ENCODE measurements at regions of chr12 and their contacts with region 1.

Region 1: GRCh38 chr12:53974084-53975063 is at the start of gene HOTAIR:
- DNase-seq: peak; percentile 48
- ATAC-seq: peak; percentile 53
- H3K4me3 Mint-ChIP-seq: peak within 1 kb of the TSS; percentile 48
- H3K27ac Mint-ChIP-seq: no peak within 1 kb of the TSS
- H3K4me1 Mint-ChIP-seq: peaks cover 24% of the 10 kb centered on the region
- H3K27me3 Mint-ChIP-seq: peaks cover 83% of the 10 kb centered on the region
- total RNA-seq, gene HOTAIR: not detected

Region 2: GRCh38 chr12:53917126-53917653 is 57.2 kb before region 1 on chr12:
- CTCF ChIA-PET with region 1: no interaction called
- POLR2A ChIA-PET with region 1: no interaction called
- intact Hi-C with region 1: no loop called
- DNase-seq: no peak
- ATAC-seq: no peak
- H3K4me3 Mint-ChIP-seq: no peak overlapping the region
- H3K27ac Mint-ChIP-seq: no peak overlapping the region
- H3K4me1 Mint-ChIP-seq: no peaks in the 10 kb centered on the region
- H3K27me3 Mint-ChIP-seq: peaks cover 44% of the 10 kb centered on the region

Region 3: DNA sequence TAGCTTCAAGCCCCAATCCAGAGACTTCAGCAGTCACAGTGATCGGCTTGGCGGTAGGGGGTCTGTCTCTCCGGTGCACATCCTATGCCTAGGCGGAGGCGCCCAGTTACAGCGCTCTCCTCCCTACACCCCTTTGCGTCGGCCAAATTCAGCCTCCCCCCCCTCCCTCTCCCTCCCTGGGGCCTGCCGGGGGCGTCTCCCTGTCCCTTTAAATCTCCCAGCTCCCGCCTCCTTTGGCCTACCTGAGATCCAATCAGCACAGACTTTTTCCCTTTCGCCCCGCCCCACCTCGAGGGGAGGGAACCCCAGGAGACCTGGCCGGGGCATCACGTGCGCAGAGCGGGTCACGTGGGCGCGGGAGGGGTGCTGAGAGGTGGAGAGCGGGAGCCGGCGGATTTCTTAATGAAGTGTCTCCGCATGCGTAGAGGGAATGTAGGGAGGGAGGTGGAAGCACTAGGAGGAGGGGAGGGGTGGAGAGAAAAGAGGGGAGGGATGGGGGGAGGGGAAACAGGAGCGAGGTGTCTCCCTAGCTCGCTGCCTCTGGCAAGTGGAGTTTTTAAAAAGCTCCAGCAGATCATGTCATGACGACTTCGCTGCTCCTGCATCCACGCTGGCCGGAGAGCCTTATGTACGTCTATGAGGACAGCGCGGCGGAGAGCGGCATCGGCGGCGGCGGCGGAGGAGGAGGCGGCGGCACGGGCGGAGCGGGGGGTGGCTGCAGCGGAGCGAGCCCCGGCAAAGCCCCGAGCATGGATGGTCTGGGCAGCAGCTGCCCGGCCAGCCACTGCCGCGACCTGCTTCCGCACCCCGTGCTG is 35.8 kb before region 1 on chr12 and contains the start of gene HOXC13:
- CTCF ChIA-PET with region 1: no interaction called
- POLR2A ChIA-PET with region 1: no interaction called
- intact Hi-C with region 1: loop called (anchors 5 kb)
- DNase-seq: peak; percentile 80
- ATAC-seq: peak; percentile 85
- H3K4me3 Mint-ChIP-seq: no peak within 1 kb of the TSS
- H3K27ac Mint-ChIP-seq: no peak within 1 kb of the TSS
- H3K4me1 Mint-ChIP-seq: peaks cover 10% of the 10 kb centered on the region
- H3K27me3 Mint-ChIP-seq: peaks cover 79% of the 10 kb centered on the region
- total RNA-seq, gene HOXC13: not detected

Region 4: GRCh38 chr12:53995378-53996239 is 21.2 kb after region 1 on chr12:
- CTCF ChIA-PET with region 1: no interaction called
- POLR2A ChIA-PET with region 1: no interaction called
- intact Hi-C with region 1: no loop called
- DNase-seq: peak; percentile 47
- ATAC-seq: peak; percentile 42
- H3K4me3 Mint-ChIP-seq: peak overlapping the region; percentile 65
- H3K27ac Mint-ChIP-seq: no peak overlapping the region
- H3K4me1 Mint-ChIP-seq: peaks cover 27% of the 10 kb centered on the region
- H3K27me3 Mint-ChIP-seq: peaks cover 83% of the 10 kb centered on the region